Dorsolateral prefrontal cortex (tissue), 120 donors: ENCODE measurements at regions of chr2 and their contacts with region 1.

Region 1: GRCh38 chr2:45929674-45930395 is 278.4 kb downstream of the PRKCE start:
- DNase-seq: peak in 1 of 10 donors; percentile 52
- H3K4me3 ChIP-seq: peak overlapping the region in 6 of 59 donors; percentile 9 to 41 (median 24)
- H3K27ac ChIP-seq: peak overlapping the region in 50 of 59 donors; percentile 11 to 91 (median 72)
- H3K27me3 ChIP-seq: no peaks in the 10 kb centered on the region
- CTCF ChIP-seq: no peak

Region 2: GRCh38 chr2:45889053-45889452 is 40.8 kb before region 1 on chr2:
- intact Hi-C with region 1: loop called in 1 of 2 experiments (anchors 5 kb)
- DNase-seq: peak in 7 of 10 donors; percentile 41 to 80 (median 59)
- H3K4me3 ChIP-seq: no peak overlapping the region
- H3K27ac ChIP-seq: peak overlapping the region in 35 of 59 donors; percentile 5 to 78 (median 49)
- H3K27me3 ChIP-seq: no peaks in the 10 kb centered on the region
- CTCF ChIP-seq: peak in 10 of 56 donors; percentile 6 to 37 (median 20)

Region 3: DNA sequence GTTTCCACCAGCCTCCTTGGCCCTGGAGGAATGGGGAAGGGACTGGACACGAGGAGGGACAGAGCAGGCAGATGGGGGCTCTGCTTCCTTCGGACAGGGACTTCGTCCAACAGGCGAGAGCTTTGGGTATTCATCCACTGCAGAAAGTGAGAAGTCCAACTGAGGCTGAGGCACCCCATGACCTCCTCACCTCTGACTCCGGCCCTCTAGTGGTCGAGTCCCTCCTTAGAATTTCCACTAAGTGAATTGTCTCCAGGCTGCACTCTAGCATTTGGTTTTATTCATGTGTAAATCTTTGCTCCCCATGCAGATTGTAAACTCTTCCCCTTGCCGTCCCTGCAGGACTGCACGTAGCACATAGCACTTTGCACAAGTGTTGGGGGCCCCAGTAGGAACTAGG is 625.2 kb after region 1 on chr2:
- intact Hi-C with region 1: no loop called
- DNase-seq: no peak
- H3K4me3 ChIP-seq: no peak overlapping the region
- H3K27ac ChIP-seq: peak overlapping the region in 28 of 59 donors; percentile 1 to 84 (median 40)
- H3K27me3 ChIP-seq: no peaks in the 10 kb centered on the region
- CTCF ChIP-seq: peak in 44 of 56 donors; percentile 10 to 51 (median 34)